ENCODE measurements at regions of chr14 and their contacts with region 1.

Region 1: DNA sequence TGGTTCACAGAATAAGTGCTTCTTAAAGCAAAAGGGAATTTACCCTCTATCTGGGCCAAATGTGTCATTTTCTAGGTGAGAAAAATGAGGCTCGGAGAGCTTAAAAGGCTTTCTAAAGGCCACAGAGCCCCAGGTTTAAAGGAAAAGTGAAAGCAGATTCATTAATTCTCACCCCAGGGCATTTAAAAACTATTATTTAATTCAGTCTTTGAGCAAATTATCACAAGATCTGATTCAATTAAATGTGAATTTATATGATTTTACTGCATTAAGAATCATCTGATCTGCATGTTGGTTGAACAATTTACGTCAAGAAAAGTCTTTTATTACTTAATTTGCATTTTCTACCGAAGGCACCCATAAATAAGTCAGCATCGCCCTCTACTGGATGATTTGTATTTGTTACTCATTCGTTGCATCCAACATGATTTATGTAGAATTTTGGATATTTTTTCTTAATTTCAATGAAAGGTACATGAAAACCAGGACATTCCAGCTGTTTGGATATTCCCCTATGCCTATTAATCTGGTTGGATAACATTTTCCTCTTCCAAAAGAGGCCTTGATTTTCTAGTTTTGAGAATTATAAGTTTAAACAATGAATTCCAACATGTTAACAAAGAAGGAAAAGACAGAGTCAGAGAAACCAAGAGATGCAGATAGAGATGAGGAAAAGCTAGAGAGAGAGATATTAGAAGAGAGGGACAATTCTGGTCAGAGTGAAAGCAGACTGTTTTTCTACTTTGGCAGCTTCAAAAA is 19.1 kb upstream of the DHRS7 start:
- DNase-seq: no peak
- ATAC-seq: peak; percentile 76
- H3K4me3 ChIP-seq: peak overlapping the region; percentile 43; the same call in 1 of the 2 replicates
- H3K27ac ChIP-seq: peak overlapping the region; percentile 72
- H3K4me1 ChIP-seq: peaks cover 11% of the 10 kb centered on the region
- H3K27me3 ChIP-seq: no peaks in the 10 kb centered on the region
- CTCF ChIP-seq: peak; percentile 45 to 78 (median 61)
- EP300 ChIP-seq: no peak
- POLR2A ChIP-seq: no peak
- RAD21 ChIP-seq: peak; percentile 95

Region 2: DNA sequence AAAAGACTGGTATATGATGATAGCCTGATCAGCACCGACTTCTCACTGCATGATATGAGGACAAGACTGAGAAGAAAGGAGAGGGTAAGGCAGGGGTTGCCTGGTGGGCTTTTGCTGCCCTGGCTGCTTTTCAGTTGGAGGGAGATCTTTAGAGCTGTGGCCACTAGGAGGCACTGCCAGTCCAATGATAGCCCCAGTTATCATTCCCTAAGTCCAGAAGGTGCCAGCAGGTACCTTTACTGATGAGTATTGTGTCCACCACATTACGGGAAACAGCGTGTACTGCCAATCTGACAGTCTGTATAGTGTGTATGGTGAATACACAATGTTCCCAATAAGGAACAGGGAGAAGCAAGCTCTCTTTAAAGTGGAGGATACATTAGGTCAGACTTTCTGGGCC is 551.9 kb before region 1 on chr14:
- CTCF ChIA-PET with region 1: interaction called, 35 read pairs
- POLR2A ChIA-PET with region 1: no interaction called
- RAD21 ChIA-PET with region 1: interaction called, 22 read pairs
- SMC1A ChIA-PET with region 1: interaction called, 18 read pairs
- in situ Hi-C with region 1: loop called (anchors 5 kb)
- intact Hi-C with region 1: loop called (anchors 2 kb)
- DNase-seq: no peak
- ATAC-seq: peak; percentile 81
- H3K4me3 ChIP-seq: no peak overlapping the region
- H3K27ac ChIP-seq: no peak overlapping the region
- H3K4me1 ChIP-seq: no peaks in the 10 kb centered on the region
- H3K27me3 ChIP-seq: peaks cover 3 to 4% of the 10 kb centered on the region in 2 experiments; a peak in 3 of 4 replicates
- CTCF ChIP-seq: peak; percentile 52 to 61 (median 56); a peak in 5 of 6 replicates
- EP300 ChIP-seq: no peak
- POLR2A ChIP-seq: no peak
- RAD21 ChIP-seq: peak; percentile 64

Region 3: DNA sequence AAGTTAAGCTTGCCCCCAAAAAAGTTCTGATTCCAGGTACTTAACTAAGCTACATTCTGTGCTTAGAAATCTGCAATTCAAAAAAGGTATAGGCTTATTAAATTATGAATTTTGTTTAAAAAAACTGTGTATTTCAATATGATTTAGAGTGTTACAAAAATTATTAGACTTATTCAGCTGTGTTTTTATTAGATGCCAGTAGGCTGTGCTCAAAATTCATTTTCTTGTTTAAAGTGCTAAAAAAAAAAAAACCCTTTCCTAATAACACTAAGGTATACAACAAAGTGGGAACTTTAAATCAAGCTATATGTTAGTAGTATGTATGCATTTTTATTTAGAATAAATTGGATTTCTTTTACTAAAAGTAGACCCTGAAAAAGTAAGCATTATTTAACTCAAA is 239.4 kb before region 1 on chr14:
- CTCF ChIA-PET with region 1: interaction called, 13 read pairs
- POLR2A ChIA-PET with region 1: no interaction called
- RAD21 ChIA-PET with region 1: interaction called, 18 read pairs
- SMC1A ChIA-PET with region 1: interaction called, 6 read pairs
- in situ Hi-C with region 1: no loop called
- intact Hi-C with region 1: no loop called
- DNase-seq: no peak
- ATAC-seq: no peak
- H3K4me3 ChIP-seq: no peak overlapping the region
- H3K27ac ChIP-seq: no peak overlapping the region
- H3K4me1 ChIP-seq: peaks cover 4% of the 10 kb centered on the region; the same call in 1 of the 2 replicates
- H3K27me3 ChIP-seq: no peaks in the 10 kb centered on the region
- CTCF ChIP-seq: no peak; a peak in 1 of 6 replicates
- EP300 ChIP-seq: no peak
- POLR2A ChIP-seq: no peak
- RAD21 ChIP-seq: no peak

Region 4: GRCh38 chr14:60079724-60080123 is 104.6 kb before region 1 on chr14:
- CTCF ChIA-PET with region 1: interaction called, 5 read pairs
- POLR2A ChIA-PET with region 1: no interaction called
- RAD21 ChIA-PET with region 1: interaction called, 12 read pairs
- SMC1A ChIA-PET with region 1: interaction called, 9 read pairs
- in situ Hi-C with region 1: no loop called
- intact Hi-C with region 1: no loop called
- DNase-seq: no peak
- ATAC-seq: no peak
- H3K4me3 ChIP-seq: no peak overlapping the region
- H3K27ac ChIP-seq: no peak overlapping the region
- H3K4me1 ChIP-seq: no peaks in the 10 kb centered on the region
- H3K27me3 ChIP-seq: no peaks in the 10 kb centered on the region
- CTCF ChIP-seq: peak in 2 of 3 experiments; percentile 3 to 15; a peak in 1 of 6 replicates
- EP300 ChIP-seq: no peak
- POLR2A ChIP-seq: no peak
- RAD21 ChIP-seq: no peak

Region 5: GRCh38 chr14:60164712-60165546 is 19.4 kb before region 1 on chr14 and contains the start of gene DHRS7:
- CTCF ChIA-PET with region 1: interaction called, 149 read pairs
- POLR2A ChIA-PET with region 1: interaction called, 22 read pairs
- RAD21 ChIA-PET with region 1: interaction called, 98 read pairs
- SMC1A ChIA-PET with region 1: interaction called, 149 read pairs
- in situ Hi-C with region 1: no loop called
- intact Hi-C with region 1: no loop called
- DNase-seq: peak; percentile 53
- ATAC-seq: peak; percentile 96
- H3K4me3 ChIP-seq: peak within 1 kb of the TSS; percentile 92
- H3K27ac ChIP-seq: peak within 1 kb of the TSS; percentile 88
- H3K4me1 ChIP-seq: peaks cover 20% of the 10 kb centered on the region
- H3K27me3 ChIP-seq: no peaks in the 10 kb centered on the region
- CTCF ChIP-seq: peak; percentile 46 to 76 (median 52); a peak in 5 of 6 replicates
- EP300 ChIP-seq: 0 out of 4 replicates have a peak, but pooled peaks of 1 of the 2 experiments have one; percentile 20
- POLR2A ChIP-seq: peak; percentile 93
- RAD21 ChIP-seq: peak; percentile 65
- polyA plus RNA-seq, gene DHRS7: 59.1 to 66.1 TPM

Region 6: DNA sequence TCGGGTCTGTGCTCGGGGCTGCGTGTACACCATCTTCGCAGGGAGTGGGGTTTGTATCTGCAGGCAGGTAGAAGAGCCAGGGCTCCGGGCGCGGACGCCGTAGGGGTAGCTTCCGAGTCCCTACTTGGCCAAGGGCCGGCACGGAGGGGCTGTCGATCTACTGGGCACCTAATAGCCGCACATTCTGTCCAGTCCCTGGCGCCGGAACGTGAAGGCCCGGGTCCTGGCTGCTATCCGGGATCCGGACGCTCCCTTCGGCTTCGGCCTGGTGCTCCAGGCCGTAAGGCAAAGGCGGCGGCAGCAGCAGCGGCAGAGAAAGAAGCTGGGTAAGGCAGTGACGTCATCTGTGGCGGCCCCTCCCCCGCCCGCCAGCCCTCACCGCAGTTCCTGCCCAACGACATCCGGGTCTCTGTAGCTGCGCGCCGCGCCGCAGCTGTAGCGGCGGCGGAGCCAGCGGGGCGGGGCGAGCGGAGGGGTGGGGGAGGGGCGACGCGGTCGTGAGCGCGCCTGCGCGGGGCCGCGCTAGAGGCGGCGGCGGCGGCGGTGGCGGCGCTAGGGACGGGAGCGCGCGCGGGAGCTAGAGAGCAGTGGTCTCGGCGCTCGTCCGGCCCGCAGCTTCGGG is 64.5 kb after region 1 on chr14 and contains the start of gene PPM1A:
- CTCF ChIA-PET with region 1: interaction called, 11 read pairs
- POLR2A ChIA-PET with region 1: interaction called, 8 read pairs
- RAD21 ChIA-PET with region 1: interaction called, 25 read pairs
- SMC1A ChIA-PET with region 1: interaction called, 52 read pairs
- in situ Hi-C with region 1: no loop called
- intact Hi-C with region 1: no loop called
- DNase-seq: peak; percentile 73
- ATAC-seq: peak; percentile 69
- H3K4me3 ChIP-seq: peak within 1 kb of the TSS; percentile 87
- H3K27ac ChIP-seq: peak within 1 kb of the TSS; percentile 100
- H3K4me1 ChIP-seq: peaks cover 13% of the 10 kb centered on the region
- H3K27me3 ChIP-seq: no peaks in the 10 kb centered on the region
- CTCF ChIP-seq: no peak
- EP300 ChIP-seq: peak; percentile 57 to 60
- POLR2A ChIP-seq: peak; percentile 90
- RAD21 ChIP-seq: no peak
- polyA plus RNA-seq, gene PPM1A: 49.0 to 58.6 TPM

Region 7: DNA sequence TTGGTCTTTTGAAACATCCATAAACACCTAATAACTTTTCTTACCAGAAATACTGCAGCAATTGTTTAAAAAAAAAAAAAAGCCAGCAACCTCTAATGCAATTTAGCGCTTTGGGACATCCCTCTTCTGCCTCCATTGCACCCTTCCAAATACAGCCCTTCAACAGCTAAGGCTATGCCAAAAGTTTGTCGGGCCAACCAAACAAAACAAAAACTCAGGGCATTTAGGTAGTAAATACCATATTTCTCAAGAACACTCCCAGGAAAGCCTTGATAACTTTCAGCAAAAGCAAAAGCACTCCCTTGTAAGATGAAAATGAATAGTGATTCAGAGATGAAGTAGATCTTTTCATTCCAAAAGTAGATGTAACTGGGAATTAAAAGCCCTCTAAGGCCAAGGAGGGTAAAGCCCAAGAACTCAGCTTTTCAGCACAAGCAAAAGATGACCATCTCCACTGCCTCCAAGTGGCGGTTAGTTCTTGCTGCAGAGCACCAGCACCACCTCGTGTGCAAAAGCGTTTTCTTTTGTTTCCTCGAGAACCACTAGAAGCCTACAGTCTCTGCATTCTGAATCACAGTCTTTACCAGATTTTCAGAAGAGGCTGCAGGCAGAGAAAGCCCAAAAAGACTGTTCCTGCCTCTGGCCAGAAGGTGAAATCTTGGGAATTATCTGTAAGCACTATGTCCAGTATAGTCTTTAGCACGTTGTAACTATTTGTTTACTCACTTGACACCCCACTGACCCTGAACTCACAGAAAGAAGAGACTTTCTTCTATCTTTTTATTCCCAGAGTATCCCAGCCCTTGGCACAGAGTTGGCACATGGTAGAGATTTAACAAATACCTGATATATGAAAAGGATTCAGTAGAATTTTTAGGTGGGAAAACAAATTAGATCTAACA is 377.8 kb after region 1 on chr14:
- CTCF ChIA-PET with region 1: interaction called, 119 read pairs
- POLR2A ChIA-PET with region 1: no interaction called
- RAD21 ChIA-PET with region 1: interaction called, 9 read pairs
- SMC1A ChIA-PET with region 1: interaction called, 66 read pairs
- in situ Hi-C with region 1: loop called (anchors 5 kb)
- intact Hi-C with region 1: loop called (anchors 1 kb)
- DNase-seq: peak; percentile 19
- ATAC-seq: peak; percentile 94
- H3K4me3 ChIP-seq: no peak overlapping the region
- H3K27ac ChIP-seq: no peak overlapping the region
- H3K4me1 ChIP-seq: 0 out of 2 replicates have a peak, but pooled peaks cover 5% of the 10 kb centered on the region
- H3K27me3 ChIP-seq: no peaks in the 10 kb centered on the region
- CTCF ChIP-seq: peak; percentile 72 to 90 (median 79)
- EP300 ChIP-seq: no peak
- POLR2A ChIP-seq: no peak
- RAD21 ChIP-seq: peak; percentile 89

Measured in GM12878 (cell line).